K562 (cell line): ENCODE measurements at regions of chr20 and their contacts with region 1.

Region 1: DNA sequence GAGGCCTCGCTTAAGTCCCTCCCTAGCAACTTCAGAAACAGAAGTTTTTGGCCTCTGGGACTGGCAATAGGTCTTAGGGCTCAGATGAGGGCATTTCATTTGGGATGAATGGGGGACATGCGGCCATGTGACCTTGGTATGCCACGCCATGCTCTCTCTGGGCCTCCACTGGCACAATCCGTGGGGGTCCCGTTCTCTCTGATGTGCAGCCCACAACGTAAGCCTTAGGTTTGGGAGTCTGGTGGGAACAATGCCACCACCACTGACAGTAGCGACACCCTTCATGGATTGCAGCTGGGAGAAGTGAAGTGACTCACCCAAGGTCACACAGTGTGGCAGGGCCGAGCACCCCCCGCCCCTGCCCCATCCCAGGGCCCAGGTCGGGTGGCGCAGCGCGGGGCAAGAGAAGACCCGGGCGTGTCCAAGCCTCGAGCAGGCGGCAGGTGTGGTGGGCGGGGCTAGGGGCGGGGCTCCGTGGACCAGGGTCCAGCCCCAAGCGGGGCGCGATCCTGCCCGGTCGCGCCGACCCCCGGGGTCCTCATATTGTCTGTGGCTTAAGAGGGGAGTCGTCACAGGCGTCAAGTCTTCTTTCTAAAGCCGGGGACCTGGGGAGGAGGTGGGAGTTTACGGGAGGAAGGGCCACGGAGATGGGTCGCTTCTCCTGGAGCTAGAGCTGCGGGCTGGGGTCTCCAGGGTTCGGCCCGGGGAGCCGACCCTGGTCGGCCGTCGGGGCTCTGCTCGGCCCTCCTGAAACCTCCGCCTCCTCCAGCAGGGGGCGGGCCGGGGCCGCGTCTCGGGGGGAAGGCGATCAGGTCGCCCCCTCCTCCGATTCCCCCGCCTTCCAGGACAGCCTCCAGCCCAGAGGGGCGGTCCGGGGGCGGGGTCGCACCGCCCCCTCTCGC is 698 bp upstream of the CEBPB start:
- DNase-seq: peak; percentile 90 to 96 (median 92)
- ATAC-seq: peak; percentile 54
- H3K4me3 ChIP-seq: peak overlapping the region; percentile 95
- H3K27ac ChIP-seq: peak overlapping the region; percentile 99; the same call in 1 of the 3 replicates
- H3K4me1 ChIP-seq: peaks cover 38 to 65% of the 10 kb centered on the region in 2 experiments
- H3K27me3 ChIP-seq: no peaks in the 10 kb centered on the region
- CTCF ChIP-seq: peak; percentile 53 to 77 (median 76)
- EP300 ChIP-seq: no peak
- POLR2A ChIP-seq: no peak
- RAD21 ChIP-seq: peak; percentile 81 to 84

Region 2: DNA sequence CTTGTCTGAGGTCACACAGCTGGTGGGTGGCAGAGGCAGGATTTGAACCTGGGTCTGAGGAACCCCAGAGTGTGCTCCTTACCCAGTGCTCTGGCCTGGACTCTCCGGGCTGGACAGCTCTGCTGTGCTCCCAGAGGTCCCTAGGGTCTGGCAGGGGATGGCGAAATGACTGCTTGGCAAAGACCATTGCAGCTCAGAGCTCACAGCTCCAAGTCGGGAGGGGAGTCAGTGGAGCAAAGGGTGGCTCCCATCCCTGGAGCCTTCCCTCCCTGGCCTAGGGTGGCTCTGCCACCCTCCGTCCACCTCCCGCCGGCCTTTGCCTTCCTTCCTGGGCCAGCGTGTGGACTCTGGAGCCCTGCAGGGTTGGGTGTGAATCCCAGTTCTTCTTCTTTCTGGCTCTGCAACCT is 18.2 kb after region 1 on chr20:
- CTCF ChIA-PET with region 1: no interaction called
- POLR2A ChIA-PET with region 1: interaction called, 17 read pairs
- in situ Hi-C with region 1: no loop called
- intact Hi-C with region 1: no loop called
- DNase-seq: no peak
- ATAC-seq: no peak
- H3K4me3 ChIP-seq: no peak overlapping the region
- H3K27ac ChIP-seq: no peak overlapping the region
- H3K4me1 ChIP-seq: peaks cover 0 to 4% of the 10 kb centered on the region in 2 experiments; a peak in 1 of 5 replicates
- H3K27me3 ChIP-seq: peaks cover 20 to 26% of the 10 kb centered on the region in 2 experiments; a peak in 3 of 5 replicates
- CTCF ChIP-seq: no peak
- EP300 ChIP-seq: no peak
- POLR2A ChIP-seq: no peak
- RAD21 ChIP-seq: no peak

Region 3: GRCh38 chr20:50346372-50347283 is 156.7 kb after region 1 on chr20:
- CTCF ChIA-PET with region 1: interaction called, 3 read pairs
- POLR2A ChIA-PET with region 1: interaction called, 4 read pairs
- in situ Hi-C with region 1: no loop called
- intact Hi-C with region 1: loop called (anchors 2 kb)
- DNase-seq: no peak
- ATAC-seq: no peak
- H3K4me3 ChIP-seq: no peak overlapping the region
- H3K27ac ChIP-seq: no peak overlapping the region
- H3K4me1 ChIP-seq: peaks cover 25 to 28% of the 10 kb centered on the region in 2 experiments
- H3K27me3 ChIP-seq: no peaks in the 10 kb centered on the region
- CTCF ChIP-seq: no peak
- EP300 ChIP-seq: no peak
- POLR2A ChIP-seq: no peak
- RAD21 ChIP-seq: no peak

Region 4: DNA sequence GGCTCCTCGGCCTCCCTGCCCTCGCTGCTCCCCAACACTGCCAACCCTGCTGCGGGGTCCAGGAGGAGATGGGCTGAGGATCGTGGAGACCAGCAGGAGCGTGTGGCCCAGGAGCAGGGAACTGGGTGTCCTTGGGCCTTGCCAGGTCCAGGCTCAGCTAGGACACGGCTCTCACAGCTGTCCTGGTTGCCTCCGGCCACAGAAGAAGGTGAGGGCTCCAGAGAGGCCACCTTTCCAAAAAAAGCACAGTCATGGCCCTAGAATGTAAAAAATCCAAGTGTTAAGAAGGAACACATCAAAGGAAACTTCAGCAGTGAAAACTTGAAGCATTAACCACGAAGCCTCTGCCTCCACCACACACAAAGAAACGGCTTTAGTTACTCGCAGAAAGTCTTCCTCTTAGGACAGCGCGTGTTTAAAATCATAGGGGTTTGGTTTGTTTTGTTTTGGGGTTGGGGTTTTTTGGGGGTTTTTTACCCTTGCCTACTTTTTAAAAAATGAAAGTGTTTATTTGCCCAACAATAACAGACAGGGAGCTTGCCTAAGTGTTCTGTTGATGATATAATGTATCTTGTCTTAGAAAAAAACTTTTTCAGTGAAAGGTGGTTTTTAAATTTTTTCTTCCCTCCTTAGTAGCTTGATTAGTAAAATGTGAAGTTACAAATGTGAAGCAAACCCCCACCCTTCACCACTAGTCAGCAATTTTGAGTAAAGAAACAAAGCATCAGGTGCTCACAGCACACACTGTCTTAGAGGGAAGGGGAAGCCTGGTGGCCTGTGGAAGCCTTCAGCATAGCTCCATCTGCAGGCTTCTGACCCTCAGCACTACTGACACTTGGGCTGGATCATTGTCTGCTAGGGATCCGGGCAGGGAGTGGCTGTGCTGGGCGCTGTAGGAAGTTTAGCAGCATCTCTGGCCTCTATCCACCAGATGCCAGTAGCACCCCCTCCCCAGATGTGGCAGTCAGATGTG is 380.2 kb after region 1 on chr20:
- CTCF ChIA-PET with region 1: interaction called, 3 read pairs
- POLR2A ChIA-PET with region 1: interaction called, 4 read pairs
- in situ Hi-C with region 1: loop called (anchors 5 kb)
- intact Hi-C with region 1: loop called (anchors 5 kb)
- DNase-seq: peak; percentile 35 to 75 (median 54)
- ATAC-seq: peak; percentile 99
- H3K4me3 ChIP-seq: no peak overlapping the region
- H3K27ac ChIP-seq: peak overlapping the region; percentile 59; the same call in 2 of the 3 replicates
- H3K4me1 ChIP-seq: peaks cover 4 to 22% of the 10 kb centered on the region in 2 experiments
- H3K27me3 ChIP-seq: no peaks in the 10 kb centered on the region
- CTCF ChIP-seq: peak; percentile 79 to 88 (median 83)
- EP300 ChIP-seq: peak; percentile 31; the same call in 1 of the 2 replicates
- POLR2A ChIP-seq: no peak
- RAD21 ChIP-seq: peak; percentile 74 to 91

Region 5: DNA sequence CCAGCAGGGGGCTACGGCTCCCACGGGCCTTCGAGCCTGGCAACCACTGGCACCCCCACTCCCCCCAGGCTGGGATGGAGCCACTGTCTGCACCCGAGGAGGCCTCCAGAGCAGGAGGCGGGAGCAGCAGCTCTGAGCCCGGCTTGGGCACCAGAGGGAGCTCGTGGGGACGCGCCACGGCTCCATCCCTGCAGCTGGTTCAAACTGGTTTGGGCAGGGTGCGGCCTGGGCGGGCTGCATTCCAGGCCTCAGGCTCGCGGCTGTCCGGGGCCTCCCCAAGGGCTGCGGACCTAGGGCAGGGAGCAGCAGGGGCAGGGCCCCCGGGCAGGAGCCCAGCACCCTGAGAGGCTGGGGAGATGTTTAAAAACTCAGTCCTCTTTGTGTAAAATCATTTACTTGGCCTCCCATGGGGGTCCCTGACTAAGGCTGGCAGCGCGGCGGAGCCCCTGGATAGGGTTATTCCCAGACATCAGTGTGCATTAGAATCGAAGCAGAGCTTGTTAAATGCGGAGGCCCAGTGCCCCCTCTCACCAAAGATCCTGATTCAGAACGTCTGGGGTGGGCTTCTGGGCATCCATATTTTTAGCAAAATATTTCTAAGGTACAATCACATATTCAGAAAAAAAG is 600.8 kb after region 1 on chr20:
- CTCF ChIA-PET with region 1: no interaction called
- POLR2A ChIA-PET with region 1: no interaction called
- in situ Hi-C with region 1: no loop called
- intact Hi-C with region 1: loop called (anchors 10 kb)
- DNase-seq: peak; percentile 90 to 96 (median 92)
- ATAC-seq: peak; percentile 96
- H3K4me3 ChIP-seq: no peak overlapping the region
- H3K27ac ChIP-seq: peak overlapping the region; percentile 87
- H3K4me1 ChIP-seq: peaks cover 22 to 27% of the 10 kb centered on the region in 2 experiments
- H3K27me3 ChIP-seq: no peaks in the 10 kb centered on the region
- CTCF ChIP-seq: peak; percentile 85 to 90 (median 88)
- EP300 ChIP-seq: peak; percentile 57; the same call in 1 of the 2 replicates
- POLR2A ChIP-seq: peak; percentile 83
- RAD21 ChIP-seq: peak; percentile 45 to 47